HEK293 (cell line): ENCODE measurements at regions of chr10 and their contacts with region 1.

Region 1: DNA sequence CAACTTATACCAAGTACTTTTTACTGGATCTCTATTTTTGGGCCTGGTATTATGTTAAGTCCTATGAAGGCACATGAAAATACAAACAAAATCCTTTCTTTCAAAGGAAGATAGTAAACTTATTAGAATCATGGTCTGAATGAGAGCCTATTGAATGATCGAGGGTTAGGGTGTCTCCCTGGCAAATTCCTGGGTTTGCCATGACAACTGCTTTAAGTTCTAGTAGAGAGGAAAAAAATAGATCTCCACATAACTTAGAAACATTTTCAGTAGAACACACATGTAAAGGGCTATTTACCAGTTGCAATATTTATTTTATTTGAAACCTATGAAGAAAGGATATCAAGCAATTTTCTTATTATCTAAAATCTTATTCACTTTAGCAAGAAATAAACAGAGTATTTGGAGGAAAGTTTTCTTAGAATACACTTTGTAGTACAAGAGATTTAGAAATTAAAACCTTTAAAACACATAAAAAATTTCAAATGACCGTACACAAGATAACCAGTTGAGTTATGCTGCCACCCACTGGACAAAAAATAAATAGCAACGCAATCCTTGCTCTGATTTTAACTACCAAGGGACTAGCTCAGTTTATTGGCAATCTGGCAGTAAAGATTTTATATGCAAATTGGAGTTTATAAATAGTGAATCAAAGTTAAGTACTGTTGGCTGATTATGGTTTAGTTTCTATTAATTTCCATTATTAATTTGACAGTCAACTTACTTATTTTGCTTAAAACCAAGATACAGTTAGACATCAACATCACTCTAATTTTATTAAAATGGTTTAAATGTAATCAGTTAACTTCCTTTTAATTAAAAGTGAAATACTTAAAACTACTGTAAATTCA is 33.9 kb downstream of the CACUL1 start:
- H3K4me3 ChIP-seq: no peak overlapping the region
- H3K27ac ChIP-seq: no peak overlapping the region
- H3K4me1 ChIP-seq: peaks cover 5% of the 10 kb centered on the region; the same call in 1 of the 2 replicates
- CTCF ChIP-seq: peak; percentile 47; the same call in 1 of the 2 replicates

Region 2: GRCh38 chr10:118732245-118733165 is 11.6 kb after region 1 on chr10:
- CTCF ChIA-PET with region 1: interaction called, 34 read pairs
- POLR2A ChIA-PET with region 1: no interaction called
- H3K4me3 ChIP-seq: no peak overlapping the region
- H3K27ac ChIP-seq: no peak overlapping the region
- H3K4me1 ChIP-seq: peaks cover 51% of the 10 kb centered on the region
- CTCF ChIP-seq: no peak

Region 3: GRCh38 chr10:118990326-118990725 is 269.4 kb after region 1 on chr10:
- CTCF ChIA-PET with region 1: no interaction called
- POLR2A ChIA-PET with region 1: no interaction called
- H3K4me3 ChIP-seq: no peak overlapping the region
- H3K27ac ChIP-seq: no peak overlapping the region
- H3K4me1 ChIP-seq: no peaks in the 10 kb centered on the region
- CTCF ChIP-seq: no peak